ENCODE measurements at regions of chr11 and their contacts with region 1.

Region 1: GRCh38 chr11:120229451-120230424 is 10.2 kb upstream of the POU2F3 start:
- DNase-seq: peak in 2 of 5 donors; percentile 49 to 62
- H3K4me3 ChIP-seq: no peak overlapping the region
- H3K27ac ChIP-seq: no peak overlapping the region
- H3K4me1 ChIP-seq: peaks cover 0 to 5% (median 0%) of the 10 kb centered on the region in 3 donors
- H3K27me3 ChIP-seq: no peaks in the 10 kb centered on the region
- CTCF ChIP-seq: peak; percentile 69

Region 2: GRCh38 chr11:119782739-119783072 is 447.0 kb before region 1 on chr11:
- intact Hi-C with region 1: no loop called
- DNase-seq: peak in 1 of 5 donors; percentile 30
- H3K4me3 ChIP-seq: no peak overlapping the region
- H3K27ac ChIP-seq: no peak overlapping the region
- H3K4me1 ChIP-seq: no peaks in the 10 kb centered on the region
- H3K27me3 ChIP-seq: no peaks in the 10 kb centered on the region
- CTCF ChIP-seq: no peak

Region 3: GRCh38 chr11:120108154-120108865 is 121.4 kb before region 1 on chr11:
- intact Hi-C with region 1: no loop called
- DNase-seq: peak in 4 of 5 donors; percentile 78 to 85 (median 82)
- H3K4me3 ChIP-seq: no peak overlapping the region
- H3K27ac ChIP-seq: no peak overlapping the region
- H3K4me1 ChIP-seq: no peaks in the 10 kb centered on the region
- H3K27me3 ChIP-seq: no peaks in the 10 kb centered on the region
- CTCF ChIP-seq: peak; percentile 99

Region 4: GRCh38 chr11:120172054-120172911 is 57.5 kb before region 1 on chr11:
- intact Hi-C with region 1: loop called (anchors 5 kb)
- DNase-seq: peak; percentile 80 to 89 (median 86)
- H3K4me3 ChIP-seq: no peak overlapping the region
- H3K27ac ChIP-seq: no peak overlapping the region
- H3K4me1 ChIP-seq: peaks cover 0 to 16% (median 0%) of the 10 kb centered on the region in 3 donors
- H3K27me3 ChIP-seq: no peaks in the 10 kb centered on the region
- CTCF ChIP-seq: peak; percentile 91